ENCODE measurements at regions of chr7 and their contacts with region 1.

Region 1: GRCh38 chr7:19747740-19748339 is 25.6 kb downstream of the TMEM196 start:
- DNase-seq: peak; percentile 30
- ATAC-seq: peak; percentile 78
- H3K4me3 ChIP-seq: no peak overlapping the region
- H3K27ac ChIP-seq: no peak overlapping the region
- H3K4me1 ChIP-seq: no peaks in the 10 kb centered on the region
- H3K27me3 ChIP-seq: 0 out of 2 replicates have a peak, but pooled peaks cover 4% of the 10 kb centered on the region
- CTCF ChIP-seq: peak; percentile 76; the same call in 1 of the 2 replicates

Region 2: GRCh38 chr7:19713676-19714075 is 34.2 kb before region 1 on chr7:
- CTCF ChIA-PET with region 1: interaction called, 10 read pairs
- POLR2A ChIA-PET with region 1: no interaction called
- in situ Hi-C with region 1: no loop called
- intact Hi-C with region 1: no loop called
- DNase-seq: peak; percentile 22
- ATAC-seq: no peak
- H3K4me3 ChIP-seq: no peak overlapping the region
- H3K27ac ChIP-seq: no peak overlapping the region
- H3K4me1 ChIP-seq: peaks cover 6% of the 10 kb centered on the region; the same call in 1 of the 2 replicates
- H3K27me3 ChIP-seq: peaks cover 3% of the 10 kb centered on the region; the same call in 1 of the 2 replicates
- CTCF ChIP-seq: peak; percentile 65; the same call in 1 of the 2 replicates

Region 3: GRCh38 chr7:19919261-19920095 is 171.6 kb after region 1 on chr7:
- CTCF ChIA-PET with region 1: no interaction called
- POLR2A ChIA-PET with region 1: no interaction called
- in situ Hi-C with region 1: no loop called
- intact Hi-C with region 1: no loop called
- DNase-seq: no peak
- ATAC-seq: no peak
- H3K4me3 ChIP-seq: no peak overlapping the region
- H3K27ac ChIP-seq: no peak overlapping the region
- H3K4me1 ChIP-seq: no peaks in the 10 kb centered on the region
- H3K27me3 ChIP-seq: no peaks in the 10 kb centered on the region
- CTCF ChIP-seq: no peak

Region 4: DNA sequence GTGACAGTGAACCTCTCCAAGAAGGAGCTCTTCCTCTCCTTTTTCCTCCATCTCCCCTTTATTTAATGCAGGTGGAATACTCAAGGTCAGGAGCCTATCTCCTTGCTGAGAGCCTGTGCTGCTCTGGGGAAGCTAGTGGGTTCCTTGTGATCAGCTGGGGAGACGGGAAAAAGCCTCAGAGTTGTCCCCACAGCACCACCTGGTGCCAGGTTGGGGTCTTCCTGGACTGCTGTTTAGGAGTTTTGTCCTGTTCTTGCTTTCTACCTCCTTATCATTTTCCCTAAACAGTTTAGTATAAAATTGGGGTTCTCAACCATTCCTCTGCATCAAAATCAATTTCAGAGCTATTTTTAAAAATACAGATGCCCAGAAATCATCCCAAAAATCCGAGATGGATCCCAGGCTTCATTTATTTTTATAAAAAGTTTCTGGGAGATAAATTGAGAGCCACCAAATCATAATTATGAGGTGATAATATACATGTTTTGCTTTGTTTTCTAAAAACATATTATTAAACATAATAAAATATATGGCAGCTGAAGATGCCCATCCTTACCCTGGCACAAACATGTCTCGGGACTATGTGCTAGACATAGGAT is 425.0 kb after region 1 on chr7:
- CTCF ChIA-PET with region 1: interaction called, 4 read pairs
- POLR2A ChIA-PET with region 1: no interaction called
- in situ Hi-C with region 1: no loop called
- intact Hi-C with region 1: loop called (anchors 2 kb)
- DNase-seq: peak; percentile 60
- ATAC-seq: peak; percentile 89
- H3K4me3 ChIP-seq: no peak overlapping the region
- H3K27ac ChIP-seq: no peak overlapping the region
- H3K4me1 ChIP-seq: no peaks in the 10 kb centered on the region
- H3K27me3 ChIP-seq: no peaks in the 10 kb centered on the region
- CTCF ChIP-seq: peak; percentile 76

Region 5: GRCh38 chr7:20310963-20311742 is 563.3 kb after region 1 on chr7:
- CTCF ChIA-PET with region 1: interaction called, 6 read pairs
- POLR2A ChIA-PET with region 1: no interaction called
- in situ Hi-C with region 1: no loop called
- intact Hi-C with region 1: loop called (anchors 5 kb)
- DNase-seq: no peak
- ATAC-seq: no peak
- H3K4me3 ChIP-seq: no peak overlapping the region
- H3K27ac ChIP-seq: no peak overlapping the region
- H3K4me1 ChIP-seq: no peaks in the 10 kb centered on the region
- H3K27me3 ChIP-seq: peaks cover 4% of the 10 kb centered on the region; the same call in 1 of the 2 replicates
- CTCF ChIP-seq: peak; percentile 49; the same call in 1 of the 2 replicates

Region 6: GRCh38 chr7:20598459-20599309 is 850.8 kb after region 1 on chr7:
- CTCF ChIA-PET with region 1: interaction called, 10 read pairs
- POLR2A ChIA-PET with region 1: interaction called, 12 read pairs
- in situ Hi-C with region 1: no loop called
- intact Hi-C with region 1: loop called (anchors 2 kb)
- DNase-seq: peak; percentile 67
- ATAC-seq: peak; percentile 84
- H3K4me3 ChIP-seq: no peak overlapping the region
- H3K27ac ChIP-seq: no peak overlapping the region
- H3K4me1 ChIP-seq: no peaks in the 10 kb centered on the region
- H3K27me3 ChIP-seq: no peaks in the 10 kb centered on the region
- CTCF ChIP-seq: peak; percentile 80

Region 7: DNA sequence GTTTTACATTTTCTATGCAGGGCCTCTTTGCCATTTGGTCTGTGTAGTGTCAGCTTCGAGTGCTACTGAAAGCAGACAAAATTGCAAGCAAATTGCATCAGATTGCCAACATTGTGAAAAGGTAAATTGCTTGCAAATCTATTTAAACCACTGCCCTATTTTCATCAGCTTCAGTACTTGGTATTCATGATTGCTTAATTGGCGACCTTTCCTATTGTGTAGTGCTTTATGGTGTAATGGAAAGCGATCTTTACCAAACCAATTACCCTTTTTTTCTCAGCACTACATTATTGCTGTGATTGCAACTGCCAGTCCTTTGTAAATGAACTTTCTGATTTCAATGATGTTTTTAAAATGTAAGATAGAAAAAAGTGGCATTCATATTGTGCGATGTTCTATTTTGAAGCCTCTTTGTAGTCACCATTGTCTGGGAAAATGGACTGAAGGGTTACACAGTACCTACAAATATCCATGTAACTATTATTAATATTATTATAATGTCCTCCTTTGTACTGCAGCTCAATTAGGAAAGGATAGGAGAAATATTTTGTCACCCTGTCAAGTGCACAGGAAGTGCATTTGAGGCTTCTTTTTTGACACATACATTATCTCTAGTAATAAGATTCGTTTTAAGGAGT is 1216.6 kb after region 1 on chr7:
- CTCF ChIA-PET with region 1: interaction called, 16 read pairs
- POLR2A ChIA-PET with region 1: no interaction called
- in situ Hi-C with region 1: no loop called
- intact Hi-C with region 1: no loop called
- DNase-seq: no peak
- ATAC-seq: no peak
- H3K4me3 ChIP-seq: no peak overlapping the region
- H3K27ac ChIP-seq: no peak overlapping the region
- H3K4me1 ChIP-seq: no peaks in the 10 kb centered on the region
- H3K27me3 ChIP-seq: no peaks in the 10 kb centered on the region
- CTCF ChIP-seq: no peak

Measured in Panc1 (cell line).